Panc1 (cell line): ENCODE measurements at regions of chr3 and their contacts with region 1.

Region 1: GRCh38 chr3:153043729-153044328 is 118.2 kb upstream of the RAP2B start:
- DNase-seq: no peak
- ATAC-seq: no peak
- H3K4me3 ChIP-seq: peak overlapping the region in 1 of 2 experiments; percentile 48; a peak in 1 of 4 replicates
- H3K27ac ChIP-seq: no peak overlapping the region
- H3K4me1 ChIP-seq: 0 out of 2 replicates have a peak, but pooled peaks cover 4% of the 10 kb centered on the region
- H3K27me3 ChIP-seq: no peaks in the 10 kb centered on the region
- CTCF ChIP-seq: no peak

Region 2: GRCh38 chr3:152817400-152817799 is 226.4 kb before region 1 on chr3:
- CTCF ChIA-PET with region 1: no interaction called
- POLR2A ChIA-PET with region 1: no interaction called
- in situ Hi-C with region 1: no loop called
- intact Hi-C with region 1: no loop called
- DNase-seq: no peak
- ATAC-seq: no peak
- H3K4me3 ChIP-seq: no peak overlapping the region
- H3K27ac ChIP-seq: no peak overlapping the region
- H3K4me1 ChIP-seq: no peaks in the 10 kb centered on the region
- H3K27me3 ChIP-seq: no peaks in the 10 kb centered on the region; the same call in 1 of the 2 replicates
- CTCF ChIP-seq: no peak

Region 3: DNA sequence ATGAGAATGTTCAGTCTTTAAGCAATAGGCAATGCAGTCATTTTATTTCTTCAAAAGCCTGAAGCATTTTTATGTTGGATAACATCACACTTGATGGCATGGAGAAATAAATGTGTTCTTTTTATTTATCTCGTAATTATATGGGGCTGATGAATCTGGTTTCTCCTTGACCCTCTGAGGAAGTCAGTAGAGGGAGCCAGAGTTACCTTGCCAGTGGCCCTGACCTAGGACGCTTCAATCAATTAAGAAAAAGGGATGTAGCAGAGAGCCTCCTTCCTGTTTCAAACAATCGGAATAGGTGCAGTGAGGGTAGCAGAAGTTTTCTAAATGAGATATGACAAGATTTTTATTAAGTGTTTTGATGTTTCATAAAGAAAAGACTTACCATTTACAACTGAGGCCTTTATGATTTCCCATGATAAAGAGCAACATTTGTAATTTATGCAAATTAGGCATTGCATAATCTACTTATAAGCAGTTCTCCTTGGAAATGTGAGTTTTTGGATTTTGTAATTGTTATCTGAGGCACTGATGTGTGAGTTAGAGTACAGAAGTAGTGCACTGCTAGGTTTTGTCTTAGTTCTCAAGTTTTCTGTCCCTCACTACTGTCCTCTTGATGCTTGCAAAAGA is 247.3 kb after region 1 on chr3:
- CTCF ChIA-PET with region 1: interaction called, 4 read pairs
- POLR2A ChIA-PET with region 1: no interaction called
- in situ Hi-C with region 1: no loop called
- intact Hi-C with region 1: loop called (anchors 2 kb)
- DNase-seq: no peak
- ATAC-seq: peak; percentile 88
- H3K4me3 ChIP-seq: no peak overlapping the region
- H3K27ac ChIP-seq: no peak overlapping the region
- H3K4me1 ChIP-seq: no peaks in the 10 kb centered on the region
- H3K27me3 ChIP-seq: no peaks in the 10 kb centered on the region
- CTCF ChIP-seq: peak; percentile 81

Region 4: DNA sequence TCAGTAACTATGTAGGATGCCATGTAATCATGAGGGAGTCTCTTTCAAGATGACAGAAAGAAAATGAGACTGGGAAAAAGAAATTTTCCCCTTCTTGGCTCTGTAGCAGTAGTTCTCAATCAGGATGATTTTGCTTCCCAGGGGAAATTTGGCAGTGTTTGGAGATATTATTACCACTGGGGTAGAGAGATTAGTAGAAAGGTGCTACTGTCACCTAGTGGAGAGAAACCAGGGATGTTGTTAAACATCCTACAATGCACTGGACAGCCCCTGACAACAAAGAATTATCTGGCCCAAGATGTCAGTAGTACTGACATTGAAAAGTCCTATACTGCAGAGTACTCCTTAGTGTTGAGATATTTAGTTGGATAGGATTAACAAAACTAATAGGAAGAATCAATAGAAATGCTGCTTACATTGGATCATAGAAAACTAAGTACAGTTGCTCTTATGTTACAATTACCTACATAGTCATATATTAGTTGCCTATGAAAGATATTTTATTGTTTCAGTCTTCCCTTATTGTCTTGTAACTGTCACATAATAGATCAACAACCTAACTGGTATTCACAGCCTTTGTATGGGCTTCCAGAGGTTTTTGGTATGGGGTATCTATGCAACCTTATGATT is 551.5 kb after region 1 on chr3:
- CTCF ChIA-PET with region 1: no interaction called
- POLR2A ChIA-PET with region 1: no interaction called
- in situ Hi-C with region 1: no loop called
- intact Hi-C with region 1: loop called (anchors 5 kb)
- DNase-seq: peak; percentile 32
- ATAC-seq: peak; percentile 92
- H3K4me3 ChIP-seq: no peak overlapping the region
- H3K27ac ChIP-seq: no peak overlapping the region
- H3K4me1 ChIP-seq: no peaks in the 10 kb centered on the region
- H3K27me3 ChIP-seq: no peaks in the 10 kb centered on the region
- CTCF ChIP-seq: peak; percentile 79; the same call in 1 of the 2 replicates